A549 (cell line): ENCODE measurements at regions of chr13 and their contacts with region 1.

Region 1: GRCh38 chr13:112588490-112589297 is 741 bp upstream of the TUBGCP3 start:
- DNase-seq: no peak
- ATAC-seq: no peak
- H3K4me3 ChIP-seq: peak overlapping the region; percentile 100
- H3K27ac ChIP-seq: peak overlapping the region; percentile 100
- H3K4me1 ChIP-seq: peaks cover 8% of the 10 kb centered on the region; the same call in 1 of the 3 replicates
- CTCF ChIP-seq: no peak
- EP300 ChIP-seq: no peak
- POLR2A ChIP-seq: no peak
- RAD21 ChIP-seq: no peak

Region 2: DNA sequence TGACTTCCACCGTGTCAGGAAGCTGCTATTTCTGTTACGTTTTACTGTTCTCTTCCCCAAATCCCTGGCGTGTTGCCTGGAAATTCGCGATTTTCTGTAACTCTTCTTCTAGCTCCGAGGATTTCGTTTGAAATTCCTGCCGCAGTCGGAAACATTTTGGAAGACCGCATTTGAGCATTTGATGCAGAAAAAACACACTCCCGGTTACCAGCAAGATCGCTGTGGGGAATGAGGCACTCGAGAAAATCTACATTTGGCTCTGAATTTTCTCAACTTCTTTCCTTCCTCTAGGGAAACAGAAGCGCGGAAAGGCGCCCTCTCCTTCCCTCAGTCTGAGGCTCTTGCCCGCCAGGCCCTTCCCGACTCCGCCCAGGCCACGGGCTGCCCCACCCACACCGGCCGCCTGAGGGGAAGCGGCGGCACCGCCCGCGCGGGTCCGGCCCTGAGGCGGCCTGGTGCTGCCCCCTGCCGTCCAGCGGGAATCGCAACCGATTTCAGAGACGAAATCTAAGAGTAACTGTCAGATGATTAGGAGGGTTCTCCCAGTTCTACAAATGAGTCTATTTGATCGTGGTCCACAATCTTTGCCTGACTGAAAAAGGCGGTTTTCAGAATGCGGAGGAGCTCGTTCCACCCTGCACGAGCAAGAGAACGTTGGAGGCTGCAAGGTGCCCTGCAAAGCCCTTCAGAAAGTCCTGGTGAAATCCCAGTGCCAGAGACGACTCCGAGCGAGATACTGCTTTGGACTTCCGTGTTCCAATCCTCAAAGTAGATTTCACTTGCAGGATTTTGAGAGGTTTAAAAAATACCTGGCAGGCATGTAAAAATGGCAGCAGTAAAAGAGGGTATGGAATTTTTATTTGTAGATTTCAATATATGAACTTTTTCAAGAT is 17.7 kb after region 1 on chr13:
- CTCF ChIA-PET with region 1: interaction called, 12 read pairs
- POLR2A ChIA-PET with region 1: no interaction called
- DNase-seq: peak; percentile 53 to 76
- ATAC-seq: peak; percentile 100
- H3K4me3 ChIP-seq: peak overlapping the region; percentile 47
- H3K27ac ChIP-seq: peak overlapping the region; percentile 55 to 81
- H3K4me1 ChIP-seq: no peaks in the 10 kb centered on the region
- CTCF ChIP-seq: peak; percentile 83
- EP300 ChIP-seq: no peak
- POLR2A ChIP-seq: no peak
- RAD21 ChIP-seq: peak; percentile 78 to 89

Region 3: GRCh38 chr13:112626124-112626523 is 37.4 kb after region 1 on chr13:
- CTCF ChIA-PET with region 1: no interaction called
- POLR2A ChIA-PET with region 1: no interaction called
- DNase-seq: no peak
- ATAC-seq: no peak
- H3K4me3 ChIP-seq: no peak overlapping the region
- H3K27ac ChIP-seq: no peak overlapping the region
- H3K4me1 ChIP-seq: no peaks in the 10 kb centered on the region
- CTCF ChIP-seq: no peak
- EP300 ChIP-seq: no peak
- POLR2A ChIP-seq: no peak
- RAD21 ChIP-seq: no peak